PC-3 (cell line): ENCODE measurements at regions of chr14 and their contacts with region 1.

Region 1: DNA sequence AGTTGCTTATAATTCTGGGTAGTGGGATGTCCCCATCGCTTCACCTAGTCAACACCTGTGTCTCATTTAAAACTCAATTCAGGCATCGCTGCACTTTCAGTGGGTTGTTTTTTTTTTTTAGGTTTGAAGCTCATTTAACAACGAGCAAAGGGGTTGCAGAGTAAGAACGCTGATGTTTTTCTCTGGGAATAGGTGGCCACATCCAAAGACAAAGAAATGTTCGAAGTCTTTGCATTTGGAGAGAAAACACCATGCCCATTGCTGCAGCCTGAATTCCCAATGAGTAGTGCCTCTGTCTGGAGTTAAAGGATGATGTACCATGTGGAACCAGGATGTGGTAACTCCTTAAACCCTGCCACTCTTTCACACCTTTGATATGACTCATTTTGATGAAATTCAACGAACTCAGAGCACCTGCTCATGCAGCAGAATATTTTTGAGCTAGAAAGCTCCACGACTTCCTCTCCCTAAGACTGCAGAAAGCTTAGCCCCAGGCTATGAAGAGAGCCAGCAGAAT is 35.1 kb upstream of the BATF start:
- DNase-seq: peak; percentile 55
- ATAC-seq: peak; percentile 18; the same call in 1 of the 2 replicates
- H3K4me3 ChIP-seq: no peak overlapping the region
- H3K27ac ChIP-seq: no peak overlapping the region
- H3K4me1 ChIP-seq: peaks cover 3% of the 10 kb centered on the region; the same call in 1 of the 2 replicates
- H3K27me3 ChIP-seq: no peaks in the 10 kb centered on the region
- CTCF ChIP-seq: no peak

Region 2: GRCh38 chr14:75132382-75133086 is 354.7 kb before region 1 on chr14:
- CTCF ChIA-PET with region 1: no interaction called
- POLR2A ChIA-PET with region 1: no interaction called
- intact Hi-C with region 1: loop called (anchors 5 kb)
- DNase-seq: peak; percentile 93
- ATAC-seq: peak; percentile 89
- H3K4me3 ChIP-seq: no peak overlapping the region
- H3K27ac ChIP-seq: no peak overlapping the region
- H3K4me1 ChIP-seq: no peaks in the 10 kb centered on the region
- H3K27me3 ChIP-seq: no peaks in the 10 kb centered on the region
- CTCF ChIP-seq: peak; percentile 86

Region 3: DNA sequence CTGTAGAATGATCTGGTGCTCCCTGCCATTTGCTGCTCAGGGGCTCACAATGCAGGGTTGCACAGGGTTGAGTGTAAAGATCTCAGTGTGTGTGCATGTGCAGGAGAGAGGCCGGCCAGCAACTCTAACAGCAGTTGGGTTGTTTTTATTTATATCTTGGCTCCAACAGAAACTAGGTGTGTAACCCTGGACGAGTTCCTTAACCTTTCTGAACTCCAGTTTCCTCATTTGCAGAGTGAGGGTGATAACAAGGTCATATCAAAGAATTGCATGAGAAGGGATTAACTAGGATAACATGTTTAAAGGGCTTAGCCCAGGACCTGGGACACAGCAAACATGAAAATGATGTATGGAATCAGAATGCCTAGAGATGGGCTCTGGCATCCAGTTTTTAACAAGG is 74.2 kb before region 1 on chr14:
- CTCF ChIA-PET with region 1: no interaction called
- POLR2A ChIA-PET with region 1: no interaction called
- intact Hi-C with region 1: no loop called
- DNase-seq: no peak
- ATAC-seq: no peak
- H3K4me3 ChIP-seq: no peak overlapping the region
- H3K27ac ChIP-seq: no peak overlapping the region
- H3K4me1 ChIP-seq: no peaks in the 10 kb centered on the region
- H3K27me3 ChIP-seq: no peaks in the 10 kb centered on the region
- CTCF ChIP-seq: no peak

Region 4: GRCh38 chr14:75427482-75428229 is 59.6 kb before region 1 on chr14 and contains the start of gene JDP2:
- CTCF ChIA-PET with region 1: no interaction called
- POLR2A ChIA-PET with region 1: no interaction called
- intact Hi-C with region 1: loop called (anchors 10 kb)
- DNase-seq: peak; percentile 37
- ATAC-seq: peak; percentile 66
- H3K4me3 ChIP-seq: peak within 1 kb of the TSS; percentile 70
- H3K27ac ChIP-seq: no peak within 1 kb of the TSS
- H3K4me1 ChIP-seq: peaks cover 2% of the 10 kb centered on the region; the same call in 1 of the 2 replicates
- H3K27me3 ChIP-seq: 0 out of 2 replicates have a peak, but pooled peaks cover 12% of the 10 kb centered on the region
- CTCF ChIP-seq: no peak
- total RNA-seq, gene JDP2: 5.8 and 8.2 TPM in 2 replicates

Region 5: GRCh38 chr14:75438496-75439080 is 48.6 kb before region 1 on chr14:
- CTCF ChIA-PET with region 1: no interaction called
- POLR2A ChIA-PET with region 1: no interaction called
- intact Hi-C with region 1: no loop called
- DNase-seq: no peak
- ATAC-seq: no peak
- H3K4me3 ChIP-seq: no peak overlapping the region
- H3K27ac ChIP-seq: no peak overlapping the region
- H3K4me1 ChIP-seq: peaks cover 8% of the 10 kb centered on the region; the same call in 1 of the 2 replicates
- H3K27me3 ChIP-seq: no peaks in the 10 kb centered on the region
- CTCF ChIP-seq: no peak

Region 6: GRCh38 chr14:75560962-75561432 is 73.8 kb after region 1 on chr14:
- CTCF ChIA-PET with region 1: interaction called, 19 read pairs
- POLR2A ChIA-PET with region 1: no interaction called
- intact Hi-C with region 1: loop called (anchors 1 kb)
- DNase-seq: peak; percentile 93
- ATAC-seq: peak; percentile 92
- H3K4me3 ChIP-seq: no peak overlapping the region
- H3K27ac ChIP-seq: no peak overlapping the region
- H3K4me1 ChIP-seq: peaks cover 18% of the 10 kb centered on the region
- H3K27me3 ChIP-seq: no peaks in the 10 kb centered on the region
- CTCF ChIP-seq: peak; percentile 89